ENCODE measurements at regions of chr6 and their contacts with region 1.

Region 1: DNA sequence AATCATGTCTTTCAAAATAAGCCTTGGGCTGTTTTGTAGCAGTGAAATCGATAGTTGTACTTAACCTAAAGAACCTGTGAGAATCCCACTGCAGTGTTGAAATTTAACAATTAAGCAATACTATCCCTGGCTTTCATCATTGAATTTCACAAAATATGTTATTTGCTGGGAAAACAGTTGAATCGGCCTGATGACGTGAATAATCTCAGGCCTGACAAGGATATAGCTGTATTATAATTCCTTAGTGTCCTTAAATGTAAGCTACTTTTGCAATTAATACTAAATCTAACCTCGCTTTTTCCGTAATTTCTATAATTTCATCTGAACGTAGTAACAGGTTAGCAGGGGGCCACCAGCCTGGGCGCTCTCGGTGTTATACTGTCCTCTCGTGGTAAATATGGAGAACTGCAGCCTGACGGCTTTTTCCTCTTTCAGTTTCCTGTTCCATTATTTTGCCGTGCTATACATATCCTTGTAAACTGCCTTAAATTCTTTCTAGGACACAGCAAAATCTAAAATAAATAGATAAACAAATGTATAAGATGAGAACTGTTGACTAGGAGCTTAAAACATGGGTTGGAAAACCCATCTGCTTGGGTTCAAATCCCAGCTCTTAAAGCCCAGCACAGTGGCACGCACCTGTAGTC is 24.0 kb downstream of the MTFR2 start:
- DNase-seq: peak; percentile 69 to 80
- H3K4me3 ChIP-seq: peak overlapping the region; percentile 27 to 33 (median 30)
- H3K27ac ChIP-seq: peak overlapping the region in 2 of 5 donors; percentile 52 to 63
- H3K4me1 ChIP-seq: peaks cover 10 to 15% (median 13%) of the 10 kb centered on the region in 4 donors
- H3K27me3 ChIP-seq: no peaks in the 10 kb centered on the region
- CTCF ChIP-seq: peak in 6 of 7 experiments; percentile 64 to 100 (median 100)
- EP300 ChIP-seq: no peak
- POLR2A ChIP-seq: no peak

Region 2: DNA sequence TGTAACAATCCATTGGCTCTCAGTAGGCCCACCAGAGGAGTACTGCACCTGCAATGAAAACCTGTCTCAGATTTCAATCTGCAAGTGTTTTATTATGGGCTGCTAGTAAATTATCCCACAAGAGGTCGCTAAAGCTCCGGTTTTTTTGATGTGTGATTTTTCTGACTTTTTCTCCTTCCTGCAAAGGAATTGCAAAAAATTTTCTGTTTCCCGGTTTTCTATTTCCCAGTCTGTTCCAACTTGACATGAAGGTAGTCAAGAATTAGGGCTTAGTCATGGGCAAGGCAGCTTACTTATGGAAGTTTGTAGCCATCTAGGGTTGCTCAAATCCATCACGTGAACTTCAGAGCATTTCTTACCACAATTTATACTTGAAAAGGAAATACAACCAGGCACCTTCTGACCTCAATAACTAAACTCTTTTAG is 690.1 kb before region 1 on chr6:
- intact Hi-C with region 1: loop called (anchors 10 kb)
- DNase-seq: peak in 1 of 2 donors; percentile 76
- H3K4me3 ChIP-seq: no peak overlapping the region
- H3K27ac ChIP-seq: no peak overlapping the region
- H3K4me1 ChIP-seq: peaks cover 0 to 16% (median 6%) of the 10 kb centered on the region in 4 donors
- H3K27me3 ChIP-seq: no peaks in the 10 kb centered on the region
- CTCF ChIP-seq: peak in 5 of 7 experiments; percentile 52 to 68 (median 66)
- EP300 ChIP-seq: no peak
- POLR2A ChIP-seq: no peak

Region 3: DNA sequence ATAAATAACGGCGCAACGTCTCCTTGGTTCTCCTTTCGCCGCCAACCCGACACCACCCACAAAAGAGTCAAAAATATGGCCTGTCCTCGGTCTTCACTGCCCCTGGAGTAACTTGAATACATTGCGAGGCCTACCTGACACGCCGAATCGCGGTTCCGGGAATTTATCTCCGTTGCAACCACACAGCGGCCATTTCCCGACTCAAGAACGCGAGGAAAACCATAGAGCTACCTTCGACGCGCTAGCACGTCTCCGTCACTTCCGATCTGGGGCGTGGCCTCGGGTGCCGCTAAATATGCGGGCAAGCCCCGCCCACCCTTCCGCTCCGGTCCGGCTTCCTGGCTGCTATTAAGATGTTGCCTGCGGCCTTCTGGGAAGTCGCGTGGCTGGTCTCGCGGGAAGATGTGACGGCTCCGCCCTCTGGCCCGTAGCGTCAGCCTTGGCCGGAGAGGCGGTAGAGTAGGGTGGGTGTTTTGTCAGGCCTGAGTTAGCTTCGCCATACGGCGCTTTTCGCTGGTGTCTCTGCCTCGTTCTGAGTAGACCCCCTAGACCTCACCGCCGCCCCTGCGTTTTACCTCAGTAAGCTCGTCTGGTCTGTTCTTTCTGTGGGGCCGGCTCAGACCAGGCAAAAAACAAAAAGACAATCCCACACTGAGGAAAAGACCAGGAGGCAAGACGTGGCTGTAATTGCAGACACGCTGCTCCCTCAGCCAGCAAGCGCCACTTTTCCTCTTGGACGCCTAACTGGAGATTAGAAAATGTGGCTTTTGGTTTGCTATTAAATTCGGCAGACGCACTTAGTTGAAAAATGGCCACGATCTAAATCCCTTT is 63.6 kb after region 1 on chr6 and contains the start of gene BCLAF1:
- intact Hi-C with region 1: no loop called
- DNase-seq: peak; percentile 100
- H3K4me3 ChIP-seq: peak within 1 kb of the TSS; percentile 63 to 99 (median 85)
- H3K27ac ChIP-seq: peak within 1 kb of the TSS; percentile 97 to 100 (median 100)
- H3K4me1 ChIP-seq: peaks cover 37 to 54% (median 47%) of the 10 kb centered on the region in 4 donors
- H3K27me3 ChIP-seq: no peaks in the 10 kb centered on the region
- CTCF ChIP-seq: no peak
- EP300 ChIP-seq: peak; percentile 29
- POLR2A ChIP-seq: peak in 2 of 4 donors; percentile 97 to 98
- total RNA-seq, gene BCLAF1: 137 to 294 (median 172) TPM